WTC11 (cell line): ENCODE measurements at regions of chr6 and their contacts with region 1.

Region 1: DNA sequence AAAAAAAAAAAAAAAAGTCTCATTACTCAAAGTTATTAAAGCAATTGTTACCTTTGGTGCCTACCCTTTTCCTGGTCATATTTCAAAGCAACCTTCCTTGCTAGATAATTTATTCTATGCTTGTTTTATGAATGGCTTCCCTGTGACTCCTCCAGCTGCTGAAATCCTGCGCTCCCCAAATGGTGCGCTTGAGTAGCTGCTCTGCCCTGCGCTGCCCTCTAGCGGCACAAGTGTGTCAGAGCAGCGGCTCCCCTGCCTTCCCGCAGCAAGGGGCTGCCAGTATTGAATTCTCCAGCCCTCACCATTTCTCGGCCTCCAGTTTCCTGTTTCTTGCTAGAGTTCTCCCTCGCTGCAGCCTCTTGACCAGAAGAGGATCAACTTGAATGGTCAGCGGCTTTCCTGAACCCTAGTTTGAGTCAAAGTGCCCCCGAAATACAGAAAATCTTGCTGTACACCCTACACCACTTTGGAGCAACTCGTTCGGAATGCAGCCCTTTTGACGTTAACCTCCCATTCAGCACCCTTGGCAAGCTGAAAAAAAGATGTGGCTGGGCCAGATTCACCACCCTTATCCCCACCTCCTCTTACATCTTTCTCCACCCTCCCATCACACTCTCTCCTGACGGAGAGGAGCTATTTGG is 60.4 kb upstream of the KLHL31 start:
- DNase-seq: peak; percentile 86
- ATAC-seq: peak; percentile 72
- H3K4me3 Mint-ChIP-seq: no peak overlapping the region
- H3K27ac Mint-ChIP-seq: no peak overlapping the region
- H3K4me1 Mint-ChIP-seq: peaks cover 43% of the 10 kb centered on the region
- H3K27me3 Mint-ChIP-seq: no peaks in the 10 kb centered on the region
- CTCF ChIP-seq: peak; percentile 87

Region 2: GRCh38 chr6:53694810-53695394 is 31.0 kb before region 1 on chr6:
- CTCF ChIA-PET with region 1: interaction called, 11 read pairs
- POLR2A ChIA-PET with region 1: no interaction called
- DNase-seq: no peak
- ATAC-seq: no peak
- H3K4me3 Mint-ChIP-seq: no peak overlapping the region
- H3K27ac Mint-ChIP-seq: no peak overlapping the region
- H3K4me1 Mint-ChIP-seq: no peaks in the 10 kb centered on the region
- H3K27me3 Mint-ChIP-seq: no peaks in the 10 kb centered on the region; the same call in 1 of the 2 replicates
- CTCF ChIP-seq: no peak

Region 3: DNA sequence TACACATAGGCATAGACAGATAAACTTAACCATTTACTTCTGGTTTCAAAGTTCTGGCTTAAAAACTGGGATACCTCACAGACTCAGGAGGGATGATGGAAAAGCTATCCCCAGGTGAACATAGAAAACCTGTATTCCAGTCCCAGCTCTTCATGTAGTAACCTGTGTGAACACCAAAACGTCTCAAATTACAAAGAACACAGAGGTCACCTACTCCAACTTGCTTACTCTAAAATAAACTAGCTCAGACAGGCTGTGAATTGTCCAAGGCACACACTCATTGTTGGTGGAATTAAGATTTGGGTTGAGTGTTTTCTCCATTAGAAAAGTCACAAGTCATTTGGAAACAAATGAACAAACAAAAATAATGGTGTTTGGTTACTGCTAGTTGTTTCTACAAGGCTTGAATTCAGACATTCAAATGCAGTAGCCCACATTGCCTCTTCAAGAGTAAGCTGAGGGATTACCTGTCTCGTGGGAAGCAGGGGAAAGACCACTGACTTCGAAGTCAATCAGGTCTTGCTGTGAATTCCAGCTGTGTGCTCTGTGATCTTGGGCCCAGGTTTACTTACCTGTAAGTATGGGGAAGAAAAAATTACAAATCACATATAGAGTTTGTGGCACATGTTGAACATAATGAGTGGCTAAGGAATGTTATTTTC is 20.7 kb after region 1 on chr6:
- CTCF ChIA-PET with region 1: interaction called, 24 read pairs
- POLR2A ChIA-PET with region 1: no interaction called
- DNase-seq: no peak
- ATAC-seq: peak; percentile 65
- H3K4me3 Mint-ChIP-seq: no peak overlapping the region
- H3K27ac Mint-ChIP-seq: peak overlapping the region; percentile 83
- H3K4me1 Mint-ChIP-seq: peaks cover 17% of the 10 kb centered on the region
- H3K27me3 Mint-ChIP-seq: no peaks in the 10 kb centered on the region
- CTCF ChIP-seq: no peak

Region 4: DNA sequence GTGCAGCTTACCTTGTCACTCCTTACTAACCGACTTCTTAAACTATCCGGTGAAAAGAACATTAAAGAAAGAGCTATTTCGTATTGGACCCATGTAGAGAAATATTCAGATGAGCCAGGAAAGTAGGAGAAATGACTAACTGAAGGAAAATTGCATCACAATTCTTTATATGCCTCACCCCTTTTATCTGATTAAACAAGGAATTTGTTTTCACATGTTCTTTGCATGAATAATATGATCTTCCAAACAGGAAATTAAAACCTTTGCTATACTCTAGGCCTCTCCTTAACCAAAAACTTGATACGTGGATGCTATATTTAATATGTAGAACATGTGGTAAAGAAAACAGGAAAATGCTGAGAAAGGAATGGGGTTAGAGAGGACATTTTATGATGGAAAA is 26.9 kb after region 1 on chr6:
- CTCF ChIA-PET with region 1: interaction called, 15 read pairs
- POLR2A ChIA-PET with region 1: no interaction called
- DNase-seq: no peak
- ATAC-seq: no peak
- H3K4me3 Mint-ChIP-seq: no peak overlapping the region
- H3K27ac Mint-ChIP-seq: no peak overlapping the region
- H3K4me1 Mint-ChIP-seq: peaks cover 3% of the 10 kb centered on the region; the same call in 1 of the 2 replicates
- H3K27me3 Mint-ChIP-seq: no peaks in the 10 kb centered on the region
- CTCF ChIP-seq: no peak

Region 5: DNA sequence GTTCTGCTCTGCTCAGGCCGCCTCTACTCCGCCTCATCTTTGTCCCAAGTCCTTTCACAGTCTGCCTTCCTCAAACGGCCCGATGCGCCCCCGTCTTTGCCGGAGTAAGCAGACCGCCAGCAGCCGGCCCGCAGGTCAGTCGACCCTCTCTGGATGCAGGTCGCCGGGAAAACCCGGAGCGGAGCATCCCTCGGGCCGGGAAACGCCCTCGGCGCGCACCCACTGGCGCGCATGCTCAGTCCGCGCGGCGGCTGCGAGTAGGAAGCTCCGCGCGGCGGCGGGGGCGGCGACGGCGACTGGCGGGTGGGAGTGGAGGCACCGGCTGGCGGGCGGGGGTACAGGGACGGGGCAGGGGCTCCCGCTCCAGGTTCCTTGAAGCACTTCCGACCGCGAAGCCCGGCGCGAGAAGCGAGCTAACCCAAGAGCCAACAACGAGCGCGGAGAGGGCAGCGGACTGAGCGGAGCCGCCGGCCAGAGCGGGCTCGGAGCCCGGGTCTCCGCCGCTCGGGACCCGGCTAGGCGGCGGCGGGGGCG is 68.9 kb after region 1 on chr6 and contains the start of gene LRRC1:
- CTCF ChIA-PET with region 1: interaction called, 18 read pairs
- POLR2A ChIA-PET with region 1: interaction called, 4 read pairs
- DNase-seq: peak; percentile 96
- ATAC-seq: peak; percentile 66
- H3K4me3 Mint-ChIP-seq: peak within 1 kb of the TSS; percentile 95
- H3K27ac Mint-ChIP-seq: peak within 1 kb of the TSS; percentile 98
- H3K4me1 Mint-ChIP-seq: peaks cover 30% of the 10 kb centered on the region
- H3K27me3 Mint-ChIP-seq: peaks cover 20% of the 10 kb centered on the region
- CTCF ChIP-seq: no peak
- total RNA-seq, gene LRRC1: 12.6 to 13.2 TPM (median 12.7 TPM) in 3 replicates